K562 (cell line): ENCODE measurements at regions of chr15 and their contacts with region 1.

Region 1: GRCh38 chr15:29765898-29766527 is 56.3 kb downstream of the TJP1 start:
- DNase-seq: no peak
- ATAC-seq: no peak
- H3K4me3 ChIP-seq: no peak overlapping the region
- H3K27ac ChIP-seq: no peak overlapping the region
- H3K4me1 ChIP-seq: no peaks in the 10 kb centered on the region
- H3K27me3 ChIP-seq: no peaks in the 10 kb centered on the region
- CTCF ChIP-seq: no peak
- EP300 ChIP-seq: no peak
- POLR2A ChIP-seq: no peak
- RAD21 ChIP-seq: no peak

Region 2: DNA sequence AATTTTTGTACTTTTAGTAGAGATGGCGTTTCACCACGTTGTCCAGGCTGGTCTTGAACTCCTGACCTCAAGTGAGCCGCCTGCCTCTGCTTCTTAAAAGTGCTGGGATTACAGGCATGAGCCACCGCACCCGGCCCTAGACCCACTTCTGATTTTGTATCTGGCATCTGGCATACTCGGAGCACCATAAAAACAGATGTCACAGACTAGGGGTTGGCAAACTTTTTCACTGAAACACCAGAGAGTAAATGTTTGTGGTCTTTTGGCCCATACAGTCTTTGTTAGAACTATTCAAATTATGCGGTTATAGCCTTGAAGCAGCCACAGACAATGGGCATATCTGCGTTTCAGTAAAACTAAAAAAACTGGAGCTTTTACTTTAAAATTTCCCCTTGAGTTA is 54.5 kb before region 1 on chr15:
- CTCF ChIA-PET with region 1: no interaction called
- POLR2A ChIA-PET with region 1: interaction called, 3 read pairs
- in situ Hi-C with region 1: no loop called
- intact Hi-C with region 1: loop called (anchors 10 kb)
- DNase-seq: no peak
- ATAC-seq: no peak
- H3K4me3 ChIP-seq: no peak overlapping the region
- H3K27ac ChIP-seq: no peak overlapping the region
- H3K4me1 ChIP-seq: no peaks in the 10 kb centered on the region
- H3K27me3 ChIP-seq: no peaks in the 10 kb centered on the region
- CTCF ChIP-seq: no peak
- EP300 ChIP-seq: no peak
- POLR2A ChIP-seq: no peak
- RAD21 ChIP-seq: no peak

Region 3: GRCh38 chr15:29815000-29815710 is 49.1 kb after region 1 on chr15:
- CTCF ChIA-PET with region 1: no interaction called
- POLR2A ChIA-PET with region 1: no interaction called
- in situ Hi-C with region 1: no loop called
- intact Hi-C with region 1: loop called (anchors 5 kb)
- DNase-seq: peak; percentile 22 to 81 (median 36)
- ATAC-seq: peak; percentile 97
- H3K4me3 ChIP-seq: no peak overlapping the region
- H3K27ac ChIP-seq: peak overlapping the region; percentile 74; the same call in 2 of the 3 replicates
- H3K4me1 ChIP-seq: peaks cover 0 to 18% of the 10 kb centered on the region in 2 experiments; a peak in 3 of 5 replicates
- H3K27me3 ChIP-seq: no peaks in the 10 kb centered on the region
- CTCF ChIP-seq: no peak
- EP300 ChIP-seq: 0 out of 2 replicates have a peak, but pooled peaks have one; percentile 14
- POLR2A ChIP-seq: no peak
- RAD21 ChIP-seq: no peak